BJ (cell line): ENCODE measurements at regions of chr3 and their contacts with region 1.

Region 1: DNA sequence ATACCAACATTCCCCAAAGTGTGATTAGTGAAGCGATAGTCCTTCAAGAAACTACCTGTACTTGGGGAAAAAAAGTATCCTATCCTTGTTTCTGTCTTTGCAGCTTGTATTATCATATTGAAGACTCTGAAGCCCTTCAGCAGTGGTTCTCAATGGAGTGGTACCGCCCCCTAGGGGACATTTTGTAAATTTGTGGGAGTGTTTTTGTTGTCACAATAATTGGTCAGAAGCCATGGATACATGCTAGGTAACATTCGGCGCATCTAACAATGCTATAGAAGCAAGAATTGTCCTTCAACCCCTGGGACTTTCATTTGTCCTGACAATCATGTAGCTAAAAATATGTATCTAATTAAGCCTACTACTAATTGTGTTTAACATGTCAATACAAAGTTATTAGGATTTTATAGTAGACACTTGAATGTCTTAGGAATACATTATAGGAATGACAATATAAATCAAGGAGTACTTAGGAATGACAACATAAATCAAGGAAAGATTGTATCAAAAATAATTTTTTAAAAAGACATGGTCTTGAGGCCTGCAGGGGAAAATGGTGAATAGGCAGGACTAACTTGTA is 53.7 kb downstream of the NMD3 start:
- DNase-seq: no peak
- H3K4me3 ChIP-seq: no peak overlapping the region
- H3K27me3 ChIP-seq: no peaks in the 10 kb centered on the region
- CTCF ChIP-seq: peak; percentile 78

Region 2: GRCh38 chr3:160956806-160957205 is 318.0 kb before region 1 on chr3:
- CTCF ChIA-PET with region 1: interaction called, 11 read pairs
- POLR2A ChIA-PET with region 1: no interaction called
- DNase-seq: no peak
- H3K4me3 ChIP-seq: no peak overlapping the region
- H3K27me3 ChIP-seq: no peaks in the 10 kb centered on the region
- CTCF ChIP-seq: peak; percentile 36

Region 3: DNA sequence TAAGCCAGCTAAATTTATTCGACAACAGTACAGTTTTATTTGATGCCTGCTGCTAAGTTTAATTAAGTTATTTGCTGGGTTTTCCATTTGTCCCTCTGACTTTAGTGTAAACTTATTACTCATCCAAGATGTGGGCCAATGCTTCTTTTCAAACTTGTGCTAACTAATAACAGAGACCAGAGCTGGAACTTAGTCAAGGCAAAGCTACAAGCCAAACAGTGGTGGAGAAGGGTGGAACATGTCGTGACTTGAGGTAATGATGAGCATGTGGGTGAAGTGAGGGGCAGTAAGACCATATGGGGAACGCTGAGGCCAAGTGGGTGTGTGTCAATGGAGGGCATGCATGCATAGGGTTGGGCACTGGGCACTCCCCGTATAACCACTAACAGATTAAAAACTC is 10.2 kb after region 1 on chr3:
- CTCF ChIA-PET with region 1: interaction called, 26 read pairs
- POLR2A ChIA-PET with region 1: interaction called, 14 read pairs
- DNase-seq: peak; percentile 54
- H3K4me3 ChIP-seq: no peak overlapping the region
- H3K27me3 ChIP-seq: no peaks in the 10 kb centered on the region
- CTCF ChIP-seq: no peak

Region 4: DNA sequence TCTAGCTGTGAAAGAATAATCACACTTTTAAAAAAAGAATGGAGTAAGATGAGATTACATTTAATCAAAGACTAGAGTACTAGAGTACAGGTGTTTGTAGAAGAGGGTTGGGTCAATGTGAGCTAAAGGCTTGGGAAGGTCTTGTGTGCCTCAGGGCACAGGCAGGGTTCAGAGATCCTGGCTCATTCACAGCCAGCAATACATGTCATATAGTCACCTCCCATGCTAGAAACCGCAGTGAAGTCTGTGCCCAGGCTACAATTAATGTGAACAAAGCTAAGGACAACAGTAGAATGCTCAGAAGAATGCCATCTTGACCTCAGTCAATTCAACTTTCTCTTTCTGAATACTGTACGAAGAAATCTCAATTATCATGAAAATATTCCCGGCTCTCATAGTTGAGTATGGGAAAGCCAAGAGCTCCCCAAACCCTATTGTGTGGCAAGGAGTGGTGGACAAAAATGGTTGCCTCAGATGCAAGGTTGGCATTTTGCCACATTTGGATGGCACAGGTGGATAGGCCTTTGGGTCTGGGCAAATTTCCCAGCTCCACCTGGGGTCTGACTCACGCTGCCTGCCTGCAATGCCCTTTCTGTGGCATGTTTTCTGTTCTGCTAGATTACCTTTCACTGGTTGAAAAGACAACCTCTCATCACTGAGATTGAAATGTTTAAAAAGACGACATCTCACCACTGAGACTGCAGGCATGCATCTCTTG is 16.5 kb after region 1 on chr3:
- CTCF ChIA-PET with region 1: interaction called, 26 read pairs
- POLR2A ChIA-PET with region 1: interaction called, 14 read pairs
- DNase-seq: no peak
- H3K4me3 ChIP-seq: no peak overlapping the region
- H3K27me3 ChIP-seq: no peaks in the 10 kb centered on the region
- CTCF ChIP-seq: no peak

Region 5: GRCh38 chr3:161409069-161409468 is 134.3 kb after region 1 on chr3:
- CTCF ChIA-PET with region 1: interaction called, 19 read pairs
- POLR2A ChIA-PET with region 1: no interaction called
- DNase-seq: no peak
- H3K4me3 ChIP-seq: no peak overlapping the region
- H3K27me3 ChIP-seq: no peaks in the 10 kb centered on the region; the same call in 1 of the 2 replicates
- CTCF ChIP-seq: peak; percentile 64

Region 6: DNA sequence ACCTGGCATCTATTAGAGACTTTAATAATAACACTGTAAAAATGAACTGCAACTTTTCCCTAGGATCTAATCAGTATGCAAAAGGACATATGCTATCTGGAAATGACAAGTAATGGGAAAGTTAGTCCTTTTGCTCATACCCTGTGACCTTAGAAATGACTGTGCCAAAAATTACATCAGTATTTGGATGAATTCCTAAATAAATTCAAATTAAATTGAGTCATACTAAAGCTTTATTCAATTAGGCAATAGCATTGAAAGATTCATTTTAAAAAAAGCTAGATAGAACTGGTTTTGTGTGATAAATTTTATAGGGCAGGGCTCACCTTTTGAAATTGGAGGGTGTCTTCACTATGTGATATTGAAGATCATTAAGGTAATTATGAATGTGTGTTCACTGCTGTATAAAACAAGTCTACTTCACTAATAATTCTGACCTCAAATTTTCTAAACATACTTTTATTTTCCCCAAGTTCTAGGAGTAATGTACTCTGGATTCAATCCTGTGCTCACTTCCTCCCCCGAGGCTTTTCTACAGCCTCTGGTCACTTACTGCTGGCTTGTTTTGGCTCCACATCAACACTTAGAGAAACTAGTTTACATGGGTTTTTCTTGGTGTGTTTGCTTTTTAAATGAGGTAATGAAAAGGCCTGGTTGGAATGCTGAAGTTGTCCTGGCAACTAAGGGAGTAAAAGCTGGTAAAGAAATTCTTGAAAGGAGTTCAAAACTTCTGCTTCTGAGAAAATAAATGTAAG is 140.9 kb after region 1 on chr3:
- CTCF ChIA-PET with region 1: interaction called, 15 read pairs
- POLR2A ChIA-PET with region 1: no interaction called
- DNase-seq: peak; percentile 89
- H3K4me3 ChIP-seq: no peak overlapping the region
- H3K27me3 ChIP-seq: no peaks in the 10 kb centered on the region
- CTCF ChIP-seq: no peak

Region 7: GRCh38 chr3:161423911-161424522 is 149.2 kb after region 1 on chr3:
- CTCF ChIA-PET with region 1: interaction called, 24 read pairs
- POLR2A ChIA-PET with region 1: no interaction called
- DNase-seq: no peak
- H3K4me3 ChIP-seq: no peak overlapping the region
- H3K27me3 ChIP-seq: peaks cover 2% of the 10 kb centered on the region; the same call in 1 of the 2 replicates
- CTCF ChIP-seq: peak; percentile 43